AG04450 (cell line): ENCODE measurements at regions of chr15 and their contacts with region 1.

Region 1: DNA sequence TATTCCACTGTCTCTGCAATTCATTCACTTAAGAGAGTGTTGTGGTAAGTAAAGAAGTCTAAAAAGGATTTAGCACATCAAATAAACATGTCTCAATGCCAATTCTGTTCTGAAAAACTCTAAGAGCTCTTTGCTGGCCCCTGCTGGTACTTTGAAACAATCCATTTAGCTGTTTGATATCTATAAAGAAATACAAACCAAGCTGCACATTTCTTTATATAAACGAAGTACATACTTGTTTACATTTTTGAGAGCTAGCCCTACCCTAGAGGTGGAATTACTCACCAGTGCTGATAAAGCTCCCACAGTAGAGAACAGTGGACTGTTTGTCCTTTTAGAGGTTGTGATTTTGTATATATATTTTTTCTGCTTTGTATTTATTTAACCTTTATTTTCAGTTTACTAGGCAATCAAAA is 75.5 kb downstream of the NEDD4 start:
- DNase-seq: peak; percentile 89
- H3K4me3 ChIP-seq: no peak overlapping the region
- H3K27ac ChIP-seq: no peak overlapping the region
- H3K27me3 ChIP-seq: no peaks in the 10 kb centered on the region
- CTCF ChIP-seq: peak; percentile 85

Region 2: DNA sequence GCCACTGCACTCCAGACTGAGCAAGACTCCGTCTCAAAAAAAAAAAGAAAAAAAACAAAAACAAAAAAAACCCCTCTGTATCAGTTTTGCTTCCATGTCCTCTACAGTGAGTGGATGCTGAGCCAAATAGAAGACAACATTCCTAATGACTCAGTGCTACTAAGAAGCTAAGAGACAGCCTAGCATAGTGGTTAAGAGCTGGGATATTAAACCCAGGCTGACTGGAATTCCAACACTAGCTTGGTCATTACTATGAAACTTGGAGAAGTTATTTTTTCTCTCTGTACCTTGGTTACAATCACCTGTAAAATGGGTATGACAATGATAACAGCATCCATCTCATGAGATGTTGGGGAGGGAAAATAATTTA is 268.9 kb before region 1 on chr15:
- CTCF ChIA-PET with region 1: interaction called, 18 read pairs
- POLR2A ChIA-PET with region 1: interaction called, 4 read pairs
- DNase-seq: peak; percentile 27
- H3K4me3 ChIP-seq: no peak overlapping the region
- H3K27ac ChIP-seq: no peak overlapping the region
- H3K27me3 ChIP-seq: no peaks in the 10 kb centered on the region
- CTCF ChIP-seq: no peak

Region 3: GRCh38 chr15:55846116-55846707 is 71.7 kb before region 1 on chr15:
- CTCF ChIA-PET with region 1: interaction called, 12 read pairs
- POLR2A ChIA-PET with region 1: no interaction called
- DNase-seq: peak; percentile 71
- H3K4me3 ChIP-seq: no peak overlapping the region
- H3K27ac ChIP-seq: no peak overlapping the region
- H3K27me3 ChIP-seq: no peaks in the 10 kb centered on the region
- CTCF ChIP-seq: peak; percentile 87

Region 4: GRCh38 chr15:55897560-55898336 is 20.1 kb before region 1 on chr15:
- CTCF ChIA-PET with region 1: interaction called, 48 read pairs
- POLR2A ChIA-PET with region 1: interaction called, 3 read pairs
- DNase-seq: no peak
- H3K4me3 ChIP-seq: no peak overlapping the region
- H3K27ac ChIP-seq: peak overlapping the region; percentile 86
- H3K27me3 ChIP-seq: no peaks in the 10 kb centered on the region
- CTCF ChIP-seq: peak; percentile 73

Region 5: DNA sequence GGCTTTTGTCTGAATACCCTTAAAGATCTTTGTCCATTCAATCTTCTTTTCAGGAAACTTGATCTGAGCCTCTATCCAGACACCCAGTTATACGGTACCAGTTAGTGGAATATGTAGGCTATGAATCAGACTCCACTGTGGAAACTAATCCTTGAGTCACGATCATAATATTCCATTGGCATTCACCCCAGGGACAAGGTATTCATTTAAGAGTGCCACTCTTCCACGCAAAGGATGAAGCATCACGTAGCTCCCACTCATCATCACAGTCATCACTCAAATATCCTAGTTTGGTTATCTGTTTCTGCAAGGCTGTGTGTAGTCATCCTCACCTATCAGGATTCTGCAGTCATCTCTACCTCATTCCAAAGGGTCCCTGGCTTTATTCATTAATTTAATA is 10.1 kb before region 1 on chr15:
- CTCF ChIA-PET with region 1: interaction called, 17 read pairs
- POLR2A ChIA-PET with region 1: interaction called, 24 read pairs
- DNase-seq: peak; percentile 92
- H3K4me3 ChIP-seq: peak overlapping the region; percentile 31; the same call in 1 of the 2 replicates
- H3K27ac ChIP-seq: no peak overlapping the region
- H3K27me3 ChIP-seq: no peaks in the 10 kb centered on the region
- CTCF ChIP-seq: no peak

Region 6: DNA sequence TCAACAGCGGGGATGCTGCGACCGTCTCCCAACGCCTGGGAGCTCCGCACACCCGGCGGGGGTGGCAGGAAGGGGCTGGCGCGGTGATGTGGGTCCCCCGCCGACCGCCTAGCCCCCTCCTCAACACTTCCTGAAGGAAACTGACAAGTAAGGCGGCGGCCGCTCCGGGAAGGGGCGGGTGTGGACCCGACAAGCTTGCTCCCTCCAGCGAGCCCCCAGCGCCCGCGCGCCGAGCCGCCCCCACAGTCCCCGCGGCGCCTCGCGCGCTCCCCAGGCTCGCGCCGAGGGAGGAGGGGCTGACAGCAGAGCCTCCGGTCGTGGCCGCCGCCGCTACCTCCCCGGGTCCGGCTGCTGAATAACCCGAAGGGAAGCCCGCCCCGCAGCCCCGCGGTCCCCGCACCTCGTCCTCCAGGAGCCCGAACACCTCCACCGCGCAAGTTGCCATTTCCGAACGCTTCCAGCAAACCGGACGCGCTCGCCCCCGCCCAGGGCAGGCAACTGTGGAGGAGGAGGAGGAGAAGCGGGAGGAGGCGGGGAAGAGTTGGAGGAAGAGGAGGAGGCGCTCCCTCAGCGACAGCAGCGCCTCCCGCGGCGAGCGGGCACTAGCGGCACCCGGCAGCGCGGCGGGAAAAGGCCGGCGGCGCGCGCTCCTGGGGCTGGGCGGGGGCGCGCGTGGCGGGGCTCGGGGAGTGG is 75.4 kb after region 1 on chr15 and contains the start of gene NEDD4:
- CTCF ChIA-PET with region 1: interaction called, 16 read pairs
- POLR2A ChIA-PET with region 1: interaction called, 3 read pairs
- DNase-seq: peak; percentile 61
- H3K4me3 ChIP-seq: peak within 1 kb of the TSS; percentile 78
- H3K27ac ChIP-seq: peak within 1 kb of the TSS; percentile 86
- H3K27me3 ChIP-seq: no peaks in the 10 kb centered on the region
- CTCF ChIP-seq: peak; percentile 58
- polyA plus RNA-seq, gene NEDD4: 41.7 and 57.8 TPM in 2 replicates

Region 7: GRCh38 chr15:56098195-56098863 is 180.4 kb after region 1 on chr15:
- CTCF ChIA-PET with region 1: interaction called, 10 read pairs
- POLR2A ChIA-PET with region 1: no interaction called
- DNase-seq: no peak
- H3K4me3 ChIP-seq: no peak overlapping the region
- H3K27ac ChIP-seq: no peak overlapping the region
- H3K27me3 ChIP-seq: no peaks in the 10 kb centered on the region
- CTCF ChIP-seq: peak; percentile 42; the same call in 1 of the 2 replicates